Posterior cingulate gyrus (tissue), 11 donors: ENCODE measurements at regions of chr2 and their contacts with region 1.

Region 1: GRCh38 chr2:227324995-227325838 is at the start of gene MFF:
- DNase-seq: peak; percentile 89 to 98 (median 92)

Region 2: DNA sequence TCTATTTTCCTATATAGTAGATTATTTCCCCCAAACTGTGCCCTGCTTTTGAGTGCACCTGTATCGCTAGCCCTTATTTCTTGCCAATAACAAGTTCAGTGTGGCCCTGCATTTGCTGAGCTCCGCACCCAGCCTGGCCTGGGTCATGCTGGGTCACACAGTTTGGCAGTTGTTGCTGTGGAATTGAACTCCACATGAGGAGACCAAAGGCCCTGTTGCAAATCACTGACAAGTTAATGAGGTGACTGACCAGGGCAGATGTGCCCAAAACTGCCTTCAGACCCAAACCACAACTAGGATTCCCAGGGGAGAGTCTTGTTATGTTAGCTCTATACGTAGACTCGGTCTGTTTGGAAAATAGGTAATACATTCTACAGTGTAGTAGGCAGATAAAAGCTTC is 192.2 kb before region 1 on chr2:
- intact Hi-C with region 1: loop called (anchors 10 kb)
- DNase-seq: peak in 1 of 10 donors; percentile 29

Region 3: DNA sequence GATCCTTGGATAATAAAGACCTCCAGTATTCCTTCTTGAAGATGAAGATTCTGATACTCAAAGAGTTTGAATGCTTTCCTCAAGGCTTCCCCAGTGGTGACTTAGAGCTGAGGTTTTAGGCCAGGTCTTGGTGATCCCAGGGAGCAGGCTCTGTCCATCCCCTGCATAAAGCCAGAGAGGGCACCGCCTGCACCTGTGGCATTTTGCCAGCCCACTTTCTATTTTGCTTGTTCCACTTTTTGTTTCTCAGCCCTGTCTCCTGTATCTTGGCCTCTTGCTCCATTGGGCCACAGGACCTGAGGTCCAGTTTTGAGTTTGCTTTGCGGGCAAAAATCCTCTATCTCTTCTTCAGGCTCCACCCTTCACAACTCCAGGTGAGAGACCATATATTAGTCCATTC is 69.2 kb after region 1 on chr2:
- intact Hi-C with region 1: loop called (anchors 5 kb)
- DNase-seq: no peak